ENCODE measurements at regions of chr7 and their contacts with region 1.

Region 1: DNA sequence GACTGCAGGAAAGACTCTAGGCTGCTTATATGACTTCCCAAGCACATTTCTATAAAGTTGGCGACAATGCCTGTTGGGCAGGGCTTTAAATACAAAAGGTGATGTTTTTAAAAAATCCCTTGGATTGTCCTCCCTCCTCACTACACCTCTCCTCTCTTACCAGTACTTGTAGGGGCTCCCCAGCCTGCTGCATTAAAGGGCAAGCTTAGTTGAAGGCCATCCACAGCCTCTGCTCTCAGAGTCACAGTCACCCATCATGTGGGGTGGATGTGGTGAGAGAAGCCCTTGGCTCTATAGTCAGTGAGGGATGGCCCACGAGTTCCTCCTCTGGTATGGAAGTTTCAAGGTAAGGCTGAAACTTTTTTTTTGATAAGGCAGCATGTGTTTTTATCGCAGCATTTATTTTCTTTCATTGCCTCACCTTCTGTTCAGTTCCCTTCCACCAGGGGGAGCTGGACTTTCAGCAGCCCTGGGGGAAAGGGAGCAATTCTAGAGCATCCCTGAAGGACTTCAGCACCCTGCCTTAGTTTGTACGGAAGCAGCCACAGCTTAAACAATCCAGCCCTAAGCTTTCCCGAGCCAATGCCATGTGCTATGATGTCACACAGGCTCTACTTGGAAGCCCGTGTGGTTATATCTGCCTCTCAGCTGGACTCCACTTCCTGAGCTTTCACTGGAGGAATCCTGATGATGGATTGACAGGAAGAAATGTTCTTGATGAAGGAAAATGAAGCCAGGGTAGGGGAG is 131.9 kb downstream of the CALCR start:
- DNase-seq: peak; percentile 41
- H3K27ac ChIP-seq: no peak overlapping the region
- CTCF ChIP-seq: peak; percentile 57; the same call in 1 of the 2 replicates

Region 2: DNA sequence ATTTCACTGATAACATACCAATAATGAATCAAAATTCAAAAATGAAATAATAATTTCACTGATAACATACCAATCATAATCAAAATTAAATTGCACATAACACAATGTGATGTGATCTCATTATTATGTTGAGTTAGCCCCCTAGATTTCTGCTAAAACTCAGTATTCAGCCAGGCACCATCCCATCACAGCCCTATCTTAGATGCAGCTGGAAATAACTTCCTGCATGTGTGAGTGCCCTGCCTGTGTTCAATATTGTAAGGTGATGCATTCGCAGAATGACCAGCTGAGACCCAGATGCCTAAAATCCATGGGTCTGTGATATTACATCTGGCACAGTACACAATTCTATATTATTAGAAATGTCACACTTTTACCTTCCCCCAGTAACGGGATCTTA is 10.5 kb before region 1 on chr7:
- CTCF ChIA-PET with region 1: interaction called, 11 read pairs
- POLR2A ChIA-PET with region 1: no interaction called
- DNase-seq: no peak
- H3K27ac ChIP-seq: no peak overlapping the region
- CTCF ChIP-seq: no peak

Region 3: DNA sequence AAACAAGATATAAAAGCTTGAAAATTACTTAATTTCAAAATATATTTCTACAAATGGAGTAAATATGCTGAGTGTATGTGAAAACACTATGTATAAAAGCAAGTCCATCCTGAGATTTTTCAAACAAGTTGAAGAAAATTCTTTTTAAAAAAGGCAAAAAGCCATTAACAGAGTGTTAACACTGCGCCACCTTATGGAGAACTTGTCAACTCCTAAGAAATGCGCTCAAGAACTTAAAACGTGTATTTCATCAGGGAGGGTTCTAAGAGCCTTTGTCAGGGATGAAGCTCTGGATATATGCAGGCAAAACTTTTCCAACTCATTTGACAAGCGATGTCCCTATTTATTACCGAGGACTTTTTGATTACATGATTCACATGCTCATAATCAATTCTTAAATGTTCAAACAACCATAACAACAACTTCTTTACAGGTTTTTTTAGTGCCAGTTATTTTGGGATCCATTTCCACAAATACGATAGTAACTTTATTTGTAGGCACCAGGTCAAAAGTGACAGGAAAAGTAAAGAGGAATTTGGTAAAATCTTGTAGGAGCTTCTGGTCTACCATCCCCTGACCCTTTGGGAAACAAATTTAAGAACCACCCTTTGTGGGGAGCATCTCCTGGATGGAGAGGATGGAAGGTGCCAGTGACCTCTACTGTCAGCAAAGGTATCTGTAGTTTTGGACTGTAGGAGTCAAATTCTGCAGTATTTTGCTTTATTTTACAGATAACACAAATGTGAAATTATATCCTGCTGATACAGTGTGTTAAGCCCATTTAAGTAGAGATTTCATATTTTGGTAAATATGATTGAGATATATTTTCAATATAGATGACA is 108.6 kb after region 1 on chr7:
- CTCF ChIA-PET with region 1: interaction called, 15 read pairs
- POLR2A ChIA-PET with region 1: no interaction called
- DNase-seq: no peak
- H3K27ac ChIP-seq: no peak overlapping the region
- CTCF ChIP-seq: peak; percentile 70